ENCODE measurements at regions of chr21 and their contacts with region 1.

Region 1: GRCh38 chr21:38505654-38506515 is 7.6 kb upstream of the ERG start:
- DNase-seq: no peak
- H3K4me3 ChIP-seq: peak overlapping the region; percentile 5 to 15
- H3K27ac ChIP-seq: peak overlapping the region; percentile 3 to 61
- H3K4me1 ChIP-seq: peaks cover 0 to 44% (median 23%) of the 10 kb centered on the region in 4 donors
- H3K27me3 ChIP-seq: no peaks in the 10 kb centered on the region
- CTCF ChIP-seq: peak; percentile 65 to 73

Region 2: GRCh38 chr21:37380349-37381323 is 1125.2 kb before region 1 on chr21:
- intact Hi-C with region 1: no loop called
- DNase-seq: no peak
- H3K4me3 ChIP-seq: no peak overlapping the region
- H3K27ac ChIP-seq: peak overlapping the region in 1 of 2 donors; percentile 2
- H3K4me1 ChIP-seq: peaks cover 0 to 82% (median 46%) of the 10 kb centered on the region in 4 donors
- H3K27me3 ChIP-seq: no peaks in the 10 kb centered on the region
- CTCF ChIP-seq: no peak

Region 3: DNA sequence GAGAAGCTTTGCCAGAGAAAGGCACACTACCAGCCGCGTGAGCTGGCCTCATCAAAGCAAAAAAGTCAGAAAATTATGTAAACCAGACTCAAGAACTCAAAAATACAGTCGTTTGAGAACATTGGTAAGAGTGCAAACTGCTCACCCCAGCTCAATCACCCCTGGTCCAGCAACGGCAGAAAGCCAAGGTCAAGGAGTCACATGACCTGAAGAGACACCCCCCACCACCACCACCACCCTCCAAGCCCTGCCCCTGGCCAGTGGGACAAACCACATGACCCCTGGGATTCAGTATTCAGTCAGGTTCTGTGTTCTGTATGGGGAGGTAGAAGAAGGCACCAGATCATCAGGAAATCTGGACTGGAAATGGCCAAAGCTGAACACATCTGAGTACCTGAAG is 82.2 kb after region 1 on chr21:
- intact Hi-C with region 1: loop called (anchors 10 kb)
- DNase-seq: no peak
- H3K4me3 ChIP-seq: no peak overlapping the region
- H3K27ac ChIP-seq: no peak overlapping the region
- H3K4me1 ChIP-seq: peaks cover 0 to 57% (median 11%) of the 10 kb centered on the region in 4 donors
- H3K27me3 ChIP-seq: no peaks in the 10 kb centered on the region
- CTCF ChIP-seq: no peak

Region 4: DNA sequence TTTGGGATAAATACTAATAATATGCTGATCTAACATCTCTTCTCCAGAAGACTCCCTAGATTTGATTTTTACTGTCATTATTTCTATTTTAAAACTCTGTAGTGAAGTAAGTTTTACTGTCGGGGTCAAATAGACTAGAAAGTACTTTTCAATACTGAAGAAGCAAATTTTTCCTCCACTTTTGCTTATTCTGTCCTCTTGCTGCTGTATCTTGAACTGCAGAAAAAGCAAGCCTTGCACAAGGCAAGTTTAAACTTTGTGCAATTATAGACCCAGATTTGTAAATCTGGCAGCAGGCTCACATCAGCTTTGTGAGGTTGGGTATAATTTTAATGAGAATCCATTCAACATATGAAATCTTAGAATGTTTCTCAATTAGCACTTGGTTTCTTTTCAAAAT is 148.7 kb after region 1 on chr21:
- intact Hi-C with region 1: loop called (anchors 5 kb)
- DNase-seq: no peak
- H3K4me3 ChIP-seq: no peak overlapping the region
- H3K27ac ChIP-seq: peak overlapping the region; percentile 18 to 93
- H3K4me1 ChIP-seq: peaks cover 0 to 63% (median 10%) of the 10 kb centered on the region in 4 donors
- H3K27me3 ChIP-seq: no peaks in the 10 kb centered on the region
- CTCF ChIP-seq: peak; percentile 50 to 56

Region 5: GRCh38 chr21:38712071-38712470 is 206.2 kb after region 1 on chr21:
- intact Hi-C with region 1: loop called (anchors 10 kb)
- DNase-seq: peak; percentile 28 to 74
- H3K4me3 ChIP-seq: no peak overlapping the region
- H3K27ac ChIP-seq: no peak overlapping the region
- H3K4me1 ChIP-seq: peaks cover 0 to 35% (median 5%) of the 10 kb centered on the region in 4 donors
- H3K27me3 ChIP-seq: no peaks in the 10 kb centered on the region
- CTCF ChIP-seq: peak; percentile 55 to 65

Region 6: DNA sequence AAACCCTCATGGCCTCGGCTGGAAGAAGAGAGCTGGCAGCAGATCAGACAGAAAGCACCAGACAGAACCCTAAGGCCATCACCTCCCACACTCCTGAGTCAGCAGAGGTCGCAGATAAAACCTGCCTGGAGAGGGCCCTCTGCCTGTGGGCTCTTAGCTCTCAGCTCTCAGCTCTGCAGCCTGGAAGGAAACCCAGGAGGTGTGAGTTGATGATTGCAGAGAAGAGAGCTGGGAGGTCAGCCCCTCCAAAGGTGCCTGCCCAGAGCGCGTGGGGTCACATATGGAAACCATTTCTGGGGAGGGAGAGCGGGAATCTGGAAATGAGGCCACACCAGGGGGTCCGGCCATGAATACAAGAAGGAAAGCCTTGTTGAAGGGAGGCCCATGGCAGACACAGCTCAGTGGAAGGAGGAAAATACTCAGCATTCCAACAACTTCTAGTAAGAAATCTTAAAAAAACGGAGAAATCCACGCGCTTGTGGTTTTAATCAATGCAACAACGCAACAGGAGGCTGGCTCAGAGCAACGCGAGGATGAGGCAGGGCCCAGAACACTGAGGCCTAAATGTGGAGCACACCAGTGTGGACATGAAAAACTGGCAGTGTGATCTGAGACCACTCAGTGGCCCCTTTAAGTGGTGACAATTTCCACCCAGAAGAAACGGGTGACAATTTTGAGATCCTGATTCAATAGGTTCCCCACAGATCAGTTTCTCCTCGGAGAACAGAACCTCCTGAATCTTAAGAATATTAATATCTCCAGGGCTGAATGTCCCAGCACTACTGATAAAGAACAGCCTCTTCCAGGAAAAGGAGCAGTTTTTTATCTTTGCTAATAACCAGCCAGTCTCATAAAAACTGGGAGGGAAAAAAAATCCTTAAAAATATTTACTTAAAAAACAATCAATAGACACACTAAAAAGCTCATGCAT is 631.6 kb after region 1 on chr21:
- intact Hi-C with region 1: loop called (anchors 5 kb)
- DNase-seq: no peak
- H3K4me3 ChIP-seq: no peak overlapping the region
- H3K27ac ChIP-seq: no peak overlapping the region
- H3K4me1 ChIP-seq: peaks cover 0 to 4% (median 1%) of the 10 kb centered on the region in 4 donors
- H3K27me3 ChIP-seq: no peaks in the 10 kb centered on the region
- CTCF ChIP-seq: no peak

Measured in tibial artery (tissue), 4 donors.